K562 (cell line): ENCODE measurements at regions of chr3 and their contacts with region 1.

Region 1: GRCh38 chr3:44899683-44900367 is 25.4 kb downstream of the TGM4 start:
- DNase-seq: no peak
- ATAC-seq: peak; percentile 54
- H3K4me3 ChIP-seq: no peak overlapping the region
- H3K27ac ChIP-seq: no peak overlapping the region
- H3K4me1 ChIP-seq: no peaks in the 10 kb centered on the region
- H3K27me3 ChIP-seq: peaks cover 45 to 63% of the 10 kb centered on the region in 2 experiments
- CTCF ChIP-seq: no peak
- EP300 ChIP-seq: no peak
- POLR2A ChIP-seq: no peak
- RAD21 ChIP-seq: no peak

Region 2: DNA sequence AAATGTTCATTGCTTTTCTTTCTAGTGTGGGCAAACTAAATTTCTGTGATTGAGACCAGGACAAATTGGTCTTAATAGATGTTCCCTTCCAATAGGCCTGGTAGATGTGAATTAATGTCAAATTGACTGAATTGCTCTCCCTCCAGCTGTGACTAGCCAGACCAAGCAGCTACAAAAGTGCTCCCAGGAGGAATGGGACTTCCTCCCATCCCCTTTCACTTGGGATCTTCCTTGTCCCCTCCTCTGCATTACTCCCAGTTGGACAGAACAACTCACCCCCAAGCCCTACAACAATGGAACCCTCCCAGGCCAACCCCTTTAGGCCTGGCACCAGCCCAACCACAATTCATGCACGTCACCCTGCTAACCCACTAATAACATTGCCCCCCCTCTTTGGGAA is 364.5 kb before region 1 on chr3:
- CTCF ChIA-PET with region 1: no interaction called
- POLR2A ChIA-PET with region 1: no interaction called
- in situ Hi-C with region 1: loop called (anchors 5 kb)
- intact Hi-C with region 1: no loop called
- DNase-seq: no peak
- ATAC-seq: no peak
- H3K4me3 ChIP-seq: no peak overlapping the region
- H3K27ac ChIP-seq: no peak overlapping the region
- H3K4me1 ChIP-seq: no peaks in the 10 kb centered on the region
- H3K27me3 ChIP-seq: peaks cover 0 to 4% of the 10 kb centered on the region in 2 experiments; a peak in 1 of 5 replicates
- CTCF ChIP-seq: no peak
- EP300 ChIP-seq: no peak
- POLR2A ChIP-seq: no peak
- RAD21 ChIP-seq: no peak

Region 3: GRCh38 chr3:44926921-44927320 is 27.1 kb after region 1 on chr3:
- CTCF ChIA-PET with region 1: interaction called, 3 read pairs
- POLR2A ChIA-PET with region 1: interaction called, 10 read pairs
- in situ Hi-C with region 1: no loop called
- intact Hi-C with region 1: no loop called
- DNase-seq: peak; percentile 50 to 82 (median 69)
- ATAC-seq: peak; percentile 94
- H3K4me3 ChIP-seq: no peak overlapping the region
- H3K27ac ChIP-seq: no peak overlapping the region
- H3K4me1 ChIP-seq: peaks cover 15 to 16% of the 10 kb centered on the region in 2 experiments; a peak in 4 of 5 replicates
- H3K27me3 ChIP-seq: no peaks in the 10 kb centered on the region
- CTCF ChIP-seq: no peak
- EP300 ChIP-seq: peak; percentile 12; the same call in 1 of the 2 replicates
- POLR2A ChIP-seq: no peak
- RAD21 ChIP-seq: no peak

Region 4: DNA sequence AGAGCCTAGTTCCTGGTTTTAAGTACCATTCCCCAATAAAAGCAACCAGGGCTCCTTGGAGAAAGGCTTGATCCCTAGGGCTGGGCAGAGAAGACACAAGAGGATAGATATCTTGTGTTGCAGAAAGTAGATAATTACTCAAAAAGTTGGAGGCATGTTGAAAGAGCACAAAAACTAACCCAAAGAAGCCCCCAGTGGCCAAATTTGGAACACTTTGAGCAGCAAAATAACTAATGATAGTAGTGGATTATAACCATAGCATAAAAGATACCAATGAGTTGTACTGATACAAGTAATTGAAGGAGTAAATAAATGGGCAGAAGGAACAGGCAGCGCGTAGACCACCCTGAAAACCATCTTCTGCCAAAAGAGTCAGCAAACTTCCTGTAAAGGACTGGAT is 88.2 kb after region 1 on chr3:
- CTCF ChIA-PET with region 1: no interaction called
- POLR2A ChIA-PET with region 1: no interaction called
- in situ Hi-C with region 1: no loop called
- intact Hi-C with region 1: no loop called
- DNase-seq: peak in 2 of 4 experiments; percentile 44 to 54
- ATAC-seq: peak; percentile 78
- H3K4me3 ChIP-seq: no peak overlapping the region
- H3K27ac ChIP-seq: no peak overlapping the region
- H3K4me1 ChIP-seq: peaks cover 0 to 3% of the 10 kb centered on the region in 2 experiments; a peak in 3 of 5 replicates
- H3K27me3 ChIP-seq: no peaks in the 10 kb centered on the region
- CTCF ChIP-seq: peak; percentile 35 to 69 (median 62); a peak in 5 of 6 replicates
- EP300 ChIP-seq: no peak
- POLR2A ChIP-seq: no peak
- RAD21 ChIP-seq: peak in 1 of 2 experiments; percentile 36; a peak in 3 of 4 replicates